OCI-LY7 (cell line): ENCODE measurements at regions of chr10 and their contacts with region 1.

Region 1: GRCh38 chr10:130127364-130128061 is 8.7 kb upstream of the GLRX3 start:
- DNase-seq: peak; percentile 69
- H3K4me3 ChIP-seq: no peak overlapping the region
- H3K27ac ChIP-seq: no peak overlapping the region
- H3K4me1 ChIP-seq: no peaks in the 10 kb centered on the region
- CTCF ChIP-seq: peak; percentile 83

Region 2: GRCh38 chr10:129030996-129031843 is 1096.3 kb before region 1 on chr10:
- CTCF ChIA-PET with region 1: no interaction called
- POLR2A ChIA-PET with region 1: no interaction called
- intact Hi-C with region 1: loop called (anchors 2 kb)
- DNase-seq: peak; percentile 24
- H3K4me3 ChIP-seq: no peak overlapping the region
- H3K27ac ChIP-seq: no peak overlapping the region
- H3K4me1 ChIP-seq: no peaks in the 10 kb centered on the region
- CTCF ChIP-seq: peak; percentile 88

Region 3: GRCh38 chr10:129888784-129889616 is 238.5 kb before region 1 on chr10:
- CTCF ChIA-PET with region 1: no interaction called
- POLR2A ChIA-PET with region 1: no interaction called
- intact Hi-C with region 1: loop called (anchors 1 kb)
- DNase-seq: peak; percentile 47
- H3K4me3 ChIP-seq: no peak overlapping the region
- H3K27ac ChIP-seq: no peak overlapping the region
- H3K4me1 ChIP-seq: no peaks in the 10 kb centered on the region
- CTCF ChIP-seq: peak; percentile 74

Region 4: DNA sequence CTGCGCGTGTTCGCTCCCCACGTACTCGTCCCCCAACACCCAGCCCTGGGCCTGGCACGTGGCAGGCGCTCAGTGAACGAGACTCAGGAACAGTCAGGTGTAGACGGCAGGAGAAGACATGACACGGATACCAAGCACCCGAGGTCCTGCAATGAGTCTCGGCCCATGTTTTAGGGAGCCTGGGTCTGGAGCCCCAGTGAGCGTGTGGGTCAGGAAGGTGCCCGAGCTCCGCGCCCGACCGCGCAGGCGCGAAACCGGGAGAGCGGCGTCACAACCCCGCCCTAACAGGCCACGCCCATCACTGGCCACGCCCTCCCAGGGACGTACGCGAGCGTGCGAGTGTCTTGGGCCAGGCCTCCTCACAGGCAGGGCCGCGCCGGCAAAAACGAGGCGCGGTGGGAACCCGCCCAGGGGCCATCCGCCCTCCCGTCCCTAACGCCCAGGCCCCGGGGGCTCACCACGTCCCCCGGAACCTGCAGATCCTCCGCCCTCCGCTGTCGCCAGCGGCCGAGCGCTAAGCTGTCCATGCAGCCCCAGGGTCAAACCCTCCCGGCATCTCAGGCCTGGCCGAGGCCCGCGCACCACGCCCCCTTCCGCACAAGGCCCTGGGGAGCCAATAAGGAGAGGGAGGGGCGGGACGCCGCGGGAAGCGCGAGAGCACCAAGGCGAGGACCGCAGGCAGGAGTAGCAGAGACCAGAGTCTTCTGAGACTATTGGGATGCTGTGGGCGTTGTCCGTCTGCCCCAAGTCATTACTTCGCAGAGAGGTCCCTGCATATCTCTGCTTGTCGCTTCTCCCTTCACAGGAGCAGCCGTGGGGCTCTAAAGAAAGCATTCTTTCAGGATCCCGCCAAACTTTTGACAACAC is 17.0 kb before region 1 on chr10 and contains the start of gene C10orf143:
- CTCF ChIA-PET with region 1: interaction called, 4 read pairs
- POLR2A ChIA-PET with region 1: interaction called, 10 read pairs
- intact Hi-C with region 1: no loop called
- DNase-seq: peak; percentile 96
- H3K4me3 ChIP-seq: peak within 1 kb of the TSS; percentile 95
- H3K27ac ChIP-seq: peak within 1 kb of the TSS; percentile 80
- H3K4me1 ChIP-seq: peaks cover 36% of the 10 kb centered on the region
- CTCF ChIP-seq: no peak
- total RNA-seq, gene C10orf143: 0.64 and 0.88 TPM in 2 replicates